HEK293 (cell line): ENCODE measurements at regions of chr12 and their contacts with region 1.

Region 1: GRCh38 chr12:51923501-51924271 is 16.4 kb downstream of the ACVRL1 start:
- H3K4me3 ChIP-seq: no peak overlapping the region
- H3K27ac ChIP-seq: no peak overlapping the region
- H3K4me1 ChIP-seq: peaks cover 4% of the 10 kb centered on the region; the same call in 1 of the 2 replicates
- CTCF ChIP-seq: peak; percentile 85

Region 2: DNA sequence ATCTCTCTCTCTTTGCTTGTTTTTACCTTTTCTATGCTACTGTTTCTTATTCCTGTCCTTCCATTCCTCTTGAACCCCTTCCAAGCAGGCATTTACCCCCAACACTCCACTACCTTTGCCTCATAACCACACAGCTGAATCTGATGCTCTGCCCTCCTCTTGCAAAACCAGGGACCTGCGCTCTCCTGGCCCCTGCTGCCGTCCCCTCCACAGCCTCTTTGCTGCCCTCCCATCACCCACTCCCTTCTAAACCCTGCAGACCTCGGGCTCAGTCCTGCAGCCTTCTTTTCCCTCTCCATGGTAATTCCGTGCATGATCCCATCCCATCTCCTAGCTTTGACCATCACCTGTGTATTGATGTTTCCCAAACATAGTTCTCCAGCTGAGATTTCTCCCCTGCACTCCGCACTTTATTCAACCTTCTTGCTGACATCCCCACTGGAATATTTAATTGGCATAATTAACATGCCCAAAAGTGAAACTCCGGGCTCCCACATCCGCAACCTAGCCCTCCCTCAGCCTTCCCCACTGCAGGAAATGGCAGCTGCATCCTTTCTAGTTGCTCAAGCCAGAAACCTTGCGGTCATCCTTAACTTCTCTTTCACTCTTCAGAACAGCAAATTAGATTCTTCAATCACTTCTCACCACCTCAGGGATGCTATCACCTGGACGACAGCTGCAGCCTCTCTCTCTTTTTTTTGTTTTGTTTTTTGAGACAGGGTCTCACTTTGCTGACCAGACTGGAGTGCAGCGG is 91.2 kb before region 1 on chr12:
- CTCF ChIA-PET with region 1: no interaction called
- POLR2A ChIA-PET with region 1: no interaction called
- H3K4me3 ChIP-seq: no peak overlapping the region
- H3K27ac ChIP-seq: no peak overlapping the region
- H3K4me1 ChIP-seq: no peaks in the 10 kb centered on the region
- CTCF ChIP-seq: no peak

Region 3: DNA sequence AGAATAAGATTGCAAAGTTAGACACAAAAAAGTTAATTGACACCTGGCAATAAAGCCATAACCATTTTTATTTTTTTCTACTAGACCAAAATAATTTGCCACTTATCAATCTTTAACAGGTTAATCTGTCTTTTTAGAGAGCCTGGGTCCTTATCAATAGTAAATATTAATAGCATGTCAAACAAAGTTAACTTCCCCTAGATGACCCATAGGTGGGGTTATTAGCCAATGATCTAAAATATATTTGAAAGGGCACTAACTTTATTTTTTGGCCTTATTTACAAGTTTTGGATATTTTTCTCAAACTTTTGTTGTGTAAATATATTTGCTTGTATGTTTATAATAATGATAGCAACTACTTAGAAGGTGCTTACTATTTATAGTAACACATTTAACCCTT is 31.8 kb before region 1 on chr12:
- CTCF ChIA-PET with region 1: interaction called, 19 read pairs
- POLR2A ChIA-PET with region 1: no interaction called
- H3K4me3 ChIP-seq: no peak overlapping the region
- H3K27ac ChIP-seq: no peak overlapping the region
- H3K4me1 ChIP-seq: no peaks in the 10 kb centered on the region
- CTCF ChIP-seq: no peak

Region 4: GRCh38 chr12:51905471-51906429 is 17.9 kb before region 1 on chr12:
- CTCF ChIA-PET with region 1: interaction called, 11 read pairs
- POLR2A ChIA-PET with region 1: no interaction called
- H3K4me3 ChIP-seq: no peak overlapping the region
- H3K27ac ChIP-seq: no peak overlapping the region
- H3K4me1 ChIP-seq: no peaks in the 10 kb centered on the region
- CTCF ChIP-seq: no peak

Region 5: DNA sequence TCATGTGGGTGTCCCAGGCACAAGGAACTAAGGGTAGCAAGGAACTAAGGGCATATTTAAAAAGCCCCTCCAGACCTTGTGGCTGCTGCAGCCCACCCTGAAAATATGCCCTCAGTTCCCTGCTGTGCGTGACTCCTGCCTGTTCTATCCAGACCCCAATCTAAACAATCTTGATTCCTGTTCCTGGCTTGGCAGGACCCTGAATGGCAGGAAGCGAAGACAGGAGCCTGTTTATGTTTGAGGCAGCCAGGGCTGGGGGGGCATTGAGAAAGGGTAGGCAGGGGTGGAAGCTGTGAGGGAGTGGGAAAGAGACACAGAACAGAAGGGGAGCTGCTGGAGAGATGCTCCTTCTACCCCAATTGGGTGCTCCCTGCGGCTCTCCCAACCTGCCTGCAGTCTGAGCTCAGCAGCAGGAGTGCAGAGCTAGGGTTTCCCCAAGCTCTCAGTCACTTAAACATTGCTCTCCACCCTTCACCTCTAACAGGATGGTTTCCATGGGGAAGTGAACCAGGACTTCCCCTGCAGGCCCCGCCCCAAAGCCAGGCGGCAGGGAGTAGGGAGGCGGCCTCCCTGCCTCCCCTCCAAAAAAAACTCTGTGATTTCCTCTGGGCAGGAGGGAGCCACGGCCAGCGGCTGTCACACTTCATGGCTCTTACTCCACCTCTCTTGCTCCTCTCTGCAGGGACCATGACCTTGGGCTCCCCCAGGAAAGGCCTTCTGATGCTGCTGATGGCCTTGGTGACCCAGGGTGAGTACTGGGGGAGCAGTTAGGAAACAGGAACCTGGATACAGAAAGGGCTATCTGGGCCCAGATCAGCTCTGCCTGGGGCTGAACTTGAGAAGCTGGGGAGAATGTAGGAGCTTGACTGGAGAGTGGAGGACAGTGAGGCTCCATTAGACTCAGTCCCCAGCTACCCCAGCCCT is 11.6 kb before region 1 on chr12:
- CTCF ChIA-PET with region 1: interaction called, 40 read pairs
- POLR2A ChIA-PET with region 1: no interaction called
- H3K4me3 ChIP-seq: no peak overlapping the region; the same call in 1 of the 2 replicates
- H3K27ac ChIP-seq: no peak overlapping the region
- H3K4me1 ChIP-seq: no peaks in the 10 kb centered on the region
- CTCF ChIP-seq: no peak

Region 6: GRCh38 chr12:51961834-51962233 is 38.1 kb after region 1 on chr12:
- CTCF ChIA-PET with region 1: interaction called, 10 read pairs
- POLR2A ChIA-PET with region 1: no interaction called
- H3K4me3 ChIP-seq: no peak overlapping the region
- H3K27ac ChIP-seq: no peak overlapping the region
- H3K4me1 ChIP-seq: peaks cover 3% of the 10 kb centered on the region; the same call in 1 of the 2 replicates
- CTCF ChIP-seq: no peak

Region 7: GRCh38 chr12:51970904-51971646 is 47.4 kb after region 1 on chr12:
- CTCF ChIA-PET with region 1: interaction called, 17 read pairs
- POLR2A ChIA-PET with region 1: no interaction called
- H3K4me3 ChIP-seq: no peak overlapping the region; the same call in 1 of the 2 replicates
- H3K27ac ChIP-seq: no peak overlapping the region
- H3K4me1 ChIP-seq: peaks cover 20% of the 10 kb centered on the region
- CTCF ChIP-seq: peak; percentile 32; the same call in 1 of the 2 replicates

Region 8: DNA sequence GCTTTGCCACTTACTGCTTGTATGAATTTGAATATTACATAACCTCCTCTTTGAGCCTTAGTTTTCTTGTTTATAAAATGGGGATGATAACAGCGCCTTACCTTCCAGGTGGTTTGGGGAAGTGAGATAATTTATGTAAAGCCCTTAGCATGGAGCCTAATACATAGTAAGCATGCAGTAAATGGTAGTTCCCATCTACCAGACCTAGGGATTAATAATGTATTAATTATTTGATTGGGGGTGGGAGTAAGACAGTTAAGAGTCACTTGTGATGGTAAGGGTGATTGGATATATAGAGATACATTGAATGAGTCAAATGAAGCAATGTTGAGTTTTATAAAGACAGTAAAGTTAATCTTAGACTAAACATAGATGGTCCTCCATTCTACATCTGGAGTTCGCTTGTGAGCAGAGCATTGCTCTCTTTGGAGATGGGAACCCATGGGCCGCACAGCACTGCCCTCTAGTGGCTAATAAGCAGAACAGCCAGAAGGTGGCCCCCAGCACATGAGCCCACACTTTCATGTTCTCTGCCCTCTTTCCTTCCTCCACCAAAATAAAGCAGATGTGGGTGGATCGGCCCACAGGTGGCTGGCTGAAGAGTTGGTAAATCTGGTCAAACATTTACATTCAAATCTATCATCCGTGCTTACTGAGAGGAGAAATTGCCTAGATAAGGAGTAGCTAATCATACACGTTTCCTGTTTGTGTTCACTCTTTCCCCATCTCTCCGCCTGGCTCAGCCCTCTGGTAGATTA is 56.5 kb after region 1 on chr12:
- CTCF ChIA-PET with region 1: interaction called, 14 read pairs
- POLR2A ChIA-PET with region 1: no interaction called
- H3K4me3 ChIP-seq: no peak overlapping the region
- H3K27ac ChIP-seq: no peak overlapping the region
- H3K4me1 ChIP-seq: no peaks in the 10 kb centered on the region
- CTCF ChIP-seq: peak; percentile 75